ENCODE measurements at regions of chr3 and their contacts with region 1.

Region 1: DNA sequence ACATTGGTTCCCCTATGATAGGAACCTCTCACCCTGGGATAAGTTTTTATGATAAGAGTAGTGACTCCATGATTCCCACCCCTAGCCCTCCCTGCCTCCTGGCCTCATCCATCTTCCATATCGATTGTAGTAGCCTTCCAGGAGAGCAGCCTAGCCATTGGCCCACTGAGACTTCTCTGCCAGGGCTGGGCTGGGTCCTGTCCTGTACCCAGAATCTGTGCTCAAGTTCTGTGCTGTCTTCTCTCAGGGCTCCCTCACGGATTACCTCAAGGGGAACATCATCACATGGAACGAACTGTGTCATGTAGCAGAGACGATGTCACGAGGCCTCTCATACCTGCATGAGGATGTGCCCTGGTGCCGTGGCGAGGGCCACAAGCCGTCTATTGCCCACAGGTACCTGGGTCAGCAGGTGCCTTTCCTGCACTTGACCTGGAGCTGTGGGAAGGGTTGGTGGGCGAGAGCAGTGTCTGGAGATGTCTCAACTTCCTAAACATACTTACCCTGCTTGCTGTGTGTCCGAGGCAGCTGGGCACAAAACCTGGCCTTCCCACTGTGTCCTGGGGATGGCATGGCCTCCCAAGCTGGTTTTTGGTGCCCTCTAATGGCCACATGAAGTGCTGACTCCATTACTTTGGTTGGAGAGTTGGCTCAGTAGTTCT is 16.6 kb upstream of the EXOG start:
- DNase-seq: peak; percentile 61
- H3K4me3 ChIP-seq: no peak overlapping the region
- H3K27ac ChIP-seq: no peak overlapping the region
- H3K4me1 ChIP-seq: no peaks in the 10 kb centered on the region
- H3K27me3 ChIP-seq: no peaks in the 10 kb centered on the region
- CTCF ChIP-seq: peak; percentile 84

Region 2: GRCh38 chr3:38117748-38118420 is 361.7 kb before region 1 on chr3:
- intact Hi-C with region 1: loop called (anchors 5 kb)
- DNase-seq: peak; percentile 78
- H3K4me3 ChIP-seq: no peak overlapping the region
- H3K27ac ChIP-seq: no peak overlapping the region
- H3K4me1 ChIP-seq: no peaks in the 10 kb centered on the region
- H3K27me3 ChIP-seq: no peaks in the 10 kb centered on the region
- CTCF ChIP-seq: peak; percentile 77

Region 3: DNA sequence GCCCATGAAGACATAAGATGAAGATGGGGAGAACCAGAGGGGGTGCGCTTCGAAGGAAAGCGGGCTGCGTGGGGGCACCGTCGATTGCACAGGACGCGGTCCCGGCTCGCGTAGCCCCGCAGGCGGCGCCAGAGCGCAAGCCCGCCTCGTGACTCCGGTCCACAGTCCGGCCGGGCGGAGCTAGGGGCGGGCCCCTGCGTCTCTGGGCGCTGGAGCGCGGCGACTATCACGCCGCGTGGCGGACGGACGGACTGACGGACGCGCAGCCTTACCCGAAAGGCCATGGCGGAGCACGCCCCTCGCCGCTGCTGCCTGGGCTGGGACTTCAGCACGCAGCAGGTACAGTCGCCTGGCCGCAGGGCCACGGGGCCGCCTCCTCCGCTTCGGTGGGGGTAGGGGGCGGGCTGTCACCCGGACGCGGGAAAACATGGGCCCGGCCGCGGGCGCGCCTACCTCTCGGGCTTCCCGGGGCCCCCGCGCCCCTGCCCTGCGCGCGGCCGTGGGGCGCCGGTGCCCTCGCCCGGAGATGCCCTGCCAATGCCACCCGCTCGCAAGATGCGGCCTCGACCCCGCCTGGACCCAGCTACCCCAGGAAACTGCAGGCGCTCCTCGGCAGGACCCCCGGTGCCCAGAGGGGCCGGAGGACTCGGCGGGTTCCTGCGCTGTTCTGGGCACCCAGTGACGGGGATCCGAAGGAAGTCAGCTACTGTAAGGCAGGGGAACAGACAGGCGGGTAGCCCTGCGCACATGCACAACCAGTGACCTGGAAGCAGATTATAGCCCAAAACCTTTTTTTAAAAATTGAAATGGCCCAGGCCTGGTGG is 132.8 kb before region 1 on chr3 and contains the start of gene XYLB:
- intact Hi-C with region 1: loop called (anchors 2 kb)
- DNase-seq: peak; percentile 92
- H3K4me3 ChIP-seq: peak within 1 kb of the TSS; percentile 96
- H3K27ac ChIP-seq: peak within 1 kb of the TSS; percentile 69
- H3K4me1 ChIP-seq: no peaks in the 10 kb centered on the region
- H3K27me3 ChIP-seq: no peaks in the 10 kb centered on the region
- CTCF ChIP-seq: peak; percentile 78
- total RNA-seq, gene XYLB: 13.4 to 17.4 TPM

Region 4: GRCh38 chr3:38368238-38368637 is 111.3 kb before region 1 on chr3:
- intact Hi-C with region 1: loop called (anchors 5 kb)
- DNase-seq: no peak
- H3K4me3 ChIP-seq: no peak overlapping the region
- H3K27ac ChIP-seq: no peak overlapping the region
- H3K4me1 ChIP-seq: no peaks in the 10 kb centered on the region
- H3K27me3 ChIP-seq: no peaks in the 10 kb centered on the region
- CTCF ChIP-seq: no peak